Tibial artery (tissue), 4 donors: ENCODE measurements at regions of chr12 and their contacts with region 1.

Region 1: DNA sequence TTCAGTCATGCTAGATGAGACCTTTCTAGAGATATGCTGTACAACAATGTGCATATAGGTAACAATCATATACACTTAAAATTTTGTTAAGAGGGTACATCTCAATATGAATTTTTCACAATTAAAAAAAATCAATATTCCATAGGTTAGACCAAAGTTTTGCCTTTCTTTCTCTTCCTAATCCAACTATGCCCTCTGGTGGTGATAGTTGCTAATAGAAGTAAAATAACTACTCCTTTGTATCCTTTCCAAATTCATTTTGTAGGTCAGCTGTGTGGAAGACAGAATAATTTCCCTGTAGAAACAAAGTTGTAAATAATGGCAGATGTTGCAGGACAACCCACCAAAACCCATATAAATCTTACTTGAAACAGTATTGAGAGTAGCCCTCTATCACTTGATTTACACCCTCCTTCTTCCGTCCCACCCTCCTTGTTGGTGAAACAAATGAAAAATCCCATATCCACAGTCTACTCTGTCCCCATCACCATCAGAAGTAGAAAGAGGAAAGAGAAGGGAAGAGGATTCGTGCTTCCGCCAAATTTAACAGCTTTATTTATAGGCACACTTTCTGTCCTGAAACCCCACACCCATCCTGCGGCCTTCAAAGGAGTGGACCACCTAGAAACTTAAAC is 34.2 kb upstream of the KICS2 start:
- DNase-seq: no peak
- H3K4me3 ChIP-seq: no peak overlapping the region
- H3K27ac ChIP-seq: no peak overlapping the region
- H3K4me1 ChIP-seq: peaks cover 0 to 9% (median 2%) of the 10 kb centered on the region in 4 donors
- H3K27me3 ChIP-seq: no peaks in the 10 kb centered on the region
- CTCF ChIP-seq: peak; percentile 60 to 83

Region 2: DNA sequence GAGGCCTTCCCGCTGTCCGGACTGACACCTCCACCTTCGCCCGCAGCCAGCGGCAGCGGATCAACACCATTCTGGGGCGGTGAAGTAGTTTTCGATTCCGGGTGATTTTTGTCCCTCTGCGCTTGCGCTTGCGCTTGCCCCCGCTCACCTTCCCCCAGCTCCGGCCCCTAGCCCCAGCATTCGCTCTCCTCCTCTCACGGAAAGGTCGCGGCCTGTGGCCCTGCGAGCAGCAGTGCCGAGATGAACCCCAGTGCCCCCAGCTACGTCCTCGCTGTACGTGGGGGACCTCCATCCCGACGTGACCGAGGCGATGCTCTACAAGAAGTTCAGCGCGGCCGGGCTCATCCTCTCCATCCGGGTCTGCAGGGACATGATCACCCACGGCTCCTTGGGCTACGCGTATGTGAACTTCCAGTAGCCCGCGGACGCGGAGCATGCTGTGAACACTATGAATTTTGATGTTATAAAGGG is 434.5 kb before region 1 on chr12:
- intact Hi-C with region 1: loop called (anchors 5 kb)
- DNase-seq: no peak
- H3K4me3 ChIP-seq: peak overlapping the region; percentile 56 to 57
- H3K27ac ChIP-seq: peak overlapping the region; percentile 5 to 57
- H3K4me1 ChIP-seq: no peaks in the 10 kb centered on the region
- H3K27me3 ChIP-seq: no peaks in the 10 kb centered on the region
- CTCF ChIP-seq: no peak

Region 3: DNA sequence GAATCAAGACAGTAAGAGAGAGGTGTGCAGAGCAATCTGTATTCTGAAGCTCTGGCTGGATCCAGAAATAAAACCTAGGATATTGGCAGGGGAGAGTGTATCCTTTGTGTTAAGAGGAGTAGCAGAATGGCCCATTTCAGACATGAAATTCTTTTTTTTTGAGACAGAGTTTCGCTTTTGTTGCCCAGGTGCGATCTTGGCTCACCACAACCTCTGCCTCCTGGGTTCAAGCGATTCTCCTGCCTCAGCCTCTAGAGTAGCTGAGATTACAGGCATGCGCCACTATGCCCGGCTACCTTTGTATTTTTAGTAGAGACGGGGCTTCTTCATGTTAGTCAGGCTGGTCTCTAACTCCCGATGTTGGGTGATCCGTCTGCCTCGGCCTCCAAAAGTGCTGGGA is 417.9 kb before region 1 on chr12:
- intact Hi-C with region 1: loop called (anchors 2 kb)
- DNase-seq: no peak
- H3K4me3 ChIP-seq: no peak overlapping the region
- H3K27ac ChIP-seq: no peak overlapping the region
- H3K4me1 ChIP-seq: peaks cover 0 to 5% (median 0%) of the 10 kb centered on the region in 4 donors
- H3K27me3 ChIP-seq: no peaks in the 10 kb centered on the region
- CTCF ChIP-seq: no peak